ENCODE measurements at regions of chr1 and their contacts with region 1.

Region 1: DNA sequence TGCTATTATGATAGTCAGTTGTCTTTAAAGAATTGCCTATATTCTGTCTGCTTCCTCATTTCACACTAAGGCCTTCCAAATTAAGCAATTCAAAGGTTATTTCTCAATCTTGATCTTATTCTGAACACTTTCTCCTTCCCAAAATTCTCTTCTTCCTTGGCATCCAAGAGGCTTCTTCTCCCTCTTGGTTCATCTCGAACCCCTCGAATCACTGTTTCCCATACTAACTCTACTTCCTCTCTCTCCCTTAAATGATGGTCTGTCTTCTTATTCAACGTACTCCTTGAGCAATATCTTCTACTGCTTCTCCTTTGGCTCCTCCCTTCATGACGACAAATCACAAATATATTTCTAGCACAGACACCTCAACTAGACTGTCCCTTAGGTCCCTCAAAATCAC is 4.5 kb downstream of the COPA start:
- DNase-seq: no peak
- ATAC-seq: no peak
- H3K4me3 ChIP-seq: no peak overlapping the region
- H3K27ac ChIP-seq: no peak overlapping the region
- H3K4me1 ChIP-seq: peaks cover 3% of the 10 kb centered on the region
- H3K27me3 ChIP-seq: no peaks in the 10 kb centered on the region
- CTCF ChIP-seq: no peak
- POLR2A ChIP-seq: no peak
- RAD21 ChIP-seq: no peak

Region 2: DNA sequence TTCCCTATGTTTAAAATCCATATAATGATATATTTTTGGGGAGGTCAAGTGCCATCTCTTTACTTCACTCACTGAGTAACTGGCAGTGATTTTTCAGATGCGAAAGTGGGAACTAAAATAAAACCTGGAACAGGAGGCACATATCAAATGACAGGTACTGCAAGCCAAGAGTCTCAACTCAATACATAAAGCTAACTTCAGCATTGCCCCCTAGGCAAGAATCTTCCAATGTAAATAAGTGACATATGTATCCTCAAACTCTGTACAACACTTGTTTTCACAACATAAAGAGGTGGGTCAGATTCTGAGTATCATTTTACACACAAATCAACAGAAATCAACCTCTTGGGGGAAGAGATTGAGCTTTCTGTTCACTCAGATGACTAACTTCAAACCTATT is 94.4 kb before region 1 on chr1:
- CTCF ChIA-PET with region 1: no interaction called
- POLR2A ChIA-PET with region 1: no interaction called
- dilution Hi-C with region 1: no loop called
- in situ Hi-C with region 1: no loop called
- intact Hi-C with region 1: loop called (anchors 5 kb)
- DNase-seq: no peak
- ATAC-seq: no peak
- H3K4me3 ChIP-seq: no peak overlapping the region
- H3K27ac ChIP-seq: no peak overlapping the region
- H3K4me1 ChIP-seq: peaks cover 2% of the 10 kb centered on the region; the same call in 1 of the 2 replicates
- H3K27me3 ChIP-seq: no peaks in the 10 kb centered on the region
- CTCF ChIP-seq: no peak
- POLR2A ChIP-seq: no peak
- RAD21 ChIP-seq: no peak

Region 3: GRCh38 chr1:160307118-160307854 is 31.3 kb before region 1 on chr1:
- CTCF ChIA-PET with region 1: no interaction called
- POLR2A ChIA-PET with region 1: no interaction called
- dilution Hi-C with region 1: no loop called
- in situ Hi-C with region 1: no loop called
- intact Hi-C with region 1: no loop called
- DNase-seq: no peak
- ATAC-seq: no peak
- H3K4me3 ChIP-seq: no peak overlapping the region
- H3K27ac ChIP-seq: no peak overlapping the region
- H3K4me1 ChIP-seq: no peaks in the 10 kb centered on the region
- H3K27me3 ChIP-seq: no peaks in the 10 kb centered on the region
- CTCF ChIP-seq: no peak
- POLR2A ChIP-seq: no peak
- RAD21 ChIP-seq: no peak

Region 4: GRCh38 chr1:160755911-160756848 is 417.6 kb after region 1 on chr1:
- CTCF ChIA-PET with region 1: no interaction called
- POLR2A ChIA-PET with region 1: no interaction called
- dilution Hi-C with region 1: no loop called
- in situ Hi-C with region 1: no loop called
- intact Hi-C with region 1: no loop called
- DNase-seq: no peak
- ATAC-seq: no peak
- H3K4me3 ChIP-seq: no peak overlapping the region
- H3K27ac ChIP-seq: no peak overlapping the region
- H3K4me1 ChIP-seq: no peaks in the 10 kb centered on the region
- H3K27me3 ChIP-seq: no peaks in the 10 kb centered on the region
- CTCF ChIP-seq: no peak
- POLR2A ChIP-seq: no peak
- RAD21 ChIP-seq: no peak